Vagina (tissue), 2 donors: ENCODE measurements at regions of chr4 and their contacts with region 1.

Region 1: DNA sequence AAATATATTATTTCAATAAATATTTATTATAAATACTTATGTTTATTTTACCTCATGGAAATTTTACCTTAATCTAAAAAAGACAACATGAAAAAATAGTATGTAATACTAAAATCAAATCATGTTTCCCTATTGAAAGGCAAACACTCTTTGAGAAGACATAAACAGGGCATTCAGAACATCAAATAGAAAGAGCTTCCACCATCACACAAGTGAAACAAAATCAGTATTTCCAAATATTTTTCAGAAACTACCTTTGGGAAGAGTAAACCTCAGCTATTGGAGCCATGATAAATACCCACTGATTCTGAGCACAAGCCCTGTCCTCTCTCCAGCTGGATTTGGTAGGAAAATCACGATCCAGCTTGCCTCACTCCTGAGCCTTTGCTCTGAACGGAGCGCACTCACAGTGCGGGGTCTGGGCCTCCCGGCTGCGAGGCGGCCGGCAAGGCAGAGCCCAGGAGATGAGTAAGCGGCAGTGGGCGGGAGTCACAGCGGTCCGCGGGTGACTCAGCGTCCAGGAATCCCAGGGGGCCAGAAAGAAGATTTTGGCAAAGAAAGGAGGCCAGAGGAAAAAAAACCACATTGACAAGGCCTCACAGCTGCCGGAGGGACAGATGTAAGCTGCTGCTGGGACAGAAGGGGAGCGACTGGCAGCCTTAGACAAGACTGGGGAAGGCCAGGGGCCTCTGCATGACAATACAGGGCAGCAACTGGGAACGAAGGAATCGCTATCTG is 14.7 kb upstream of the ANXA5 start:
- DNase-seq: peak in 1 of 2 donors; percentile 93
- H3K4me3 ChIP-seq: peak overlapping the region in 1 of 2 donors; percentile 21
- H3K27ac ChIP-seq: peak overlapping the region; percentile 76
- H3K4me1 ChIP-seq: peaks cover 8% of the 10 kb centered on the region
- H3K27me3 ChIP-seq: no peaks in the 10 kb centered on the region
- CTCF ChIP-seq: no peak
- POLR2A ChIP-seq: peak in 1 of 2 donors; percentile 20

Region 2: DNA sequence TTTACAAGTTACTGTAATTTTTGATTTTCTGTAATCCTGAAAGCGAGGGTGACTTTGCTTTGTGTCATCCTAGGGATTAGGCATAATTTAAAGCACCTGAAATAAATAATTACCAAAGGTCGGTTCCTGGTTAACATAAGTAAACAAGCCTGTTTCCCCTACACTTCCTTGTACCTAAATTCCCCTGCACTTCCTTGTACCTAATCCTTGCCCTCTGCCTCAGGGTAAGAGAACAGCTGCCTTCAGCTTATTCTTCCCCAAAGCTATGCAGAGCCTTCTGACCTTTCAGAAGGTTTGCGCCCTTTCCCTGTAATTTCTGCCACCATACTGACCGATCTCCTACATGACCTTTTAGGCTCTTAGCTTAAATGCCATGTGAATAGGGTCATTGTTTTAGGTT is 1916.7 kb before region 1 on chr4:
- intact Hi-C with region 1: no loop called
- DNase-seq: no peak
- H3K4me3 ChIP-seq: no peak overlapping the region
- H3K27ac ChIP-seq: no peak overlapping the region
- H3K4me1 ChIP-seq: no peaks in the 10 kb centered on the region
- H3K27me3 ChIP-seq: no peaks in the 10 kb centered on the region
- CTCF ChIP-seq: no peak
- POLR2A ChIP-seq: no peak

Region 3: DNA sequence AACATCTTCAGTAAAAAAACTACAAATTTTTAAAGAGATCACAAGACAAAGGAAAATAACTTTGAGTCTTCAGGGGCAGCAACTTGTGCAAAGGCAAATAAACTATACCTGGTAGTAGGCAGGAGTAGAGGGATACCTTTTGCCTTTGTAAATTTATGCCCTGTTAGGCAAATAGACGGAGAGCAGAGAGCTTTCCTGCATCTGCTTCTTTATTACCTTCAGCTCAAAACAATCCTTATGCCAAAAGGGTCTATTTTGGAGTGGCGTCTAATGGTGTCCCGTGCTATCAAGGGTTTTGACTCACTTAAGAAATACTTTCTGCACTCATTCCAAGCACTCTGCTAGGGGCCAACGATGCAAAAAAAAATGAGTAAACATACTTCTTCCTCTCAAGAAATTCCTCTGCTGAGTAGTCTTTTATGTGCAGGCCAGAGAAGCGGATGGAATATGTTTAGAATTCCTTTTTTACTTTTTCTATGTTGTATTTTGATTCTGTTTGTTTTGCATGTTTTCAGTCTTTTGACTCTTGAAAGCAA is 146.5 kb before region 1 on chr4:
- intact Hi-C with region 1: no loop called
- DNase-seq: no peak
- H3K4me3 ChIP-seq: no peak overlapping the region
- H3K27ac ChIP-seq: no peak overlapping the region
- H3K4me1 ChIP-seq: no peaks in the 10 kb centered on the region
- H3K27me3 ChIP-seq: no peaks in the 10 kb centered on the region
- CTCF ChIP-seq: no peak
- POLR2A ChIP-seq: no peak

Region 4: DNA sequence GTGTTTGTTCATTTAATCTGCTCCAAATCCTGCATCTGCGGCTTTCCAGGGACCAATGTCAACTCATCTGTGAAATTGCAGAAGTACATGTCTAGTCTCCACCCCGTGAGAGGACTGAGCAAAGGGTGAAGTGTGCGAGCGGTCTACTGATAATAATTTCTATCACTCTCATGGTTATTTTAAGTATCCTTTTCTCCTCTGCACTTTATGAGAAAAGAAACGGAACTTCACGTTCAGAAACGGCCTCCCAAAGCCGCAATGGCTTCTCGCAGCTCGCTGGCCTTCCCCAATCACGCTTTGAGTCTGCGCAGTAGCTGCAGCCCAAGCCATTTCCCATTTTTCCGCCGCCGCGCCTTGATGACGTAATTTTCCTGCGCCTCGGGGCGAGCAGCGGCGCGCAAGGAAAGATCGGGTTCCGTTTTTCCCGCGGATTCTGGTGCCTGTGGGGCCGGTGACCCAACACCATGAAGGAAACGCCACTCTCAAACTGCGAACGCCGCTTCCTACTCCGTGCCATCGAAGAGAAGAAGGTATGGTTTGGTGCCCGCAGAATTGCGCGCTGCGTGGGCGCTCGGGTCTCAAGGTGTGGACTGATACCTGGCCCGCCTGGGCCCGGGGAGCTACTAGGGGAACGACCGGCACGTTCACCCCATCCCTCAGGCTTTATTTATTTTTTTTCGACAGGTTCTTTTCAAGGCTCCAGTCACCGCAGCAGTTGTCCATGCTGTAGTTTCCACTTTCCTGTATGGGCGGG is 89.7 kb after region 1 on chr4 and contains the start of gene EXOSC9:
- intact Hi-C with region 1: loop called (anchors 10 kb)
- DNase-seq: peak in 1 of 2 donors; percentile 91
- H3K4me3 ChIP-seq: peak within 1 kb of the TSS; percentile 58 to 93
- H3K27ac ChIP-seq: peak within 1 kb of the TSS; percentile 87
- H3K4me1 ChIP-seq: peaks cover 12% of the 10 kb centered on the region
- H3K27me3 ChIP-seq: no peaks in the 10 kb centered on the region
- CTCF ChIP-seq: no peak
- POLR2A ChIP-seq: peak in 1 of 2 donors; percentile 51
- total RNA-seq, gene EXOSC9: 10.6 TPM

Region 5: DNA sequence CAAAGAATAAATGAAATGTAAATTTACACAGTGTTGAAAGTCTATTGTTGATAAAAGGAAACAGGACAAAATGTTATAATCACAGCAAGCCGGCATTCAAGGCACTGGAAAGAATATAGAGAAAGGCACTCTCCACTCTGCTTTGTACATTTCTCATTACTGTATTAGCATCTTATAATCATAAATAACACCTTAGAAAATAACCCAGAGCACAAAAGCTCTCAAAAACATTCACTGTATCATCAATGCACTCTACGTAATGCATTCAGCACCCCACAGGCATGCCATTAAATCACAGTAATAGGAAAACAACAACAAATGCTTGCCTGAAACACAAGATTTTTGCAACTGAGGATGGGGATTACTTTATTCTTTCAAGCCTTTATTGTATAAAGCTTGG is 315.8 kb after region 1 on chr4:
- intact Hi-C with region 1: no loop called
- DNase-seq: no peak
- H3K4me3 ChIP-seq: no peak overlapping the region
- H3K27ac ChIP-seq: no peak overlapping the region
- H3K4me1 ChIP-seq: no peaks in the 10 kb centered on the region
- H3K27me3 ChIP-seq: no peaks in the 10 kb centered on the region
- CTCF ChIP-seq: no peak
- POLR2A ChIP-seq: no peak